Heart right ventricle (tissue), 16 donors: ENCODE measurements at regions of chr20 and their contacts with region 1.

Region 1: DNA sequence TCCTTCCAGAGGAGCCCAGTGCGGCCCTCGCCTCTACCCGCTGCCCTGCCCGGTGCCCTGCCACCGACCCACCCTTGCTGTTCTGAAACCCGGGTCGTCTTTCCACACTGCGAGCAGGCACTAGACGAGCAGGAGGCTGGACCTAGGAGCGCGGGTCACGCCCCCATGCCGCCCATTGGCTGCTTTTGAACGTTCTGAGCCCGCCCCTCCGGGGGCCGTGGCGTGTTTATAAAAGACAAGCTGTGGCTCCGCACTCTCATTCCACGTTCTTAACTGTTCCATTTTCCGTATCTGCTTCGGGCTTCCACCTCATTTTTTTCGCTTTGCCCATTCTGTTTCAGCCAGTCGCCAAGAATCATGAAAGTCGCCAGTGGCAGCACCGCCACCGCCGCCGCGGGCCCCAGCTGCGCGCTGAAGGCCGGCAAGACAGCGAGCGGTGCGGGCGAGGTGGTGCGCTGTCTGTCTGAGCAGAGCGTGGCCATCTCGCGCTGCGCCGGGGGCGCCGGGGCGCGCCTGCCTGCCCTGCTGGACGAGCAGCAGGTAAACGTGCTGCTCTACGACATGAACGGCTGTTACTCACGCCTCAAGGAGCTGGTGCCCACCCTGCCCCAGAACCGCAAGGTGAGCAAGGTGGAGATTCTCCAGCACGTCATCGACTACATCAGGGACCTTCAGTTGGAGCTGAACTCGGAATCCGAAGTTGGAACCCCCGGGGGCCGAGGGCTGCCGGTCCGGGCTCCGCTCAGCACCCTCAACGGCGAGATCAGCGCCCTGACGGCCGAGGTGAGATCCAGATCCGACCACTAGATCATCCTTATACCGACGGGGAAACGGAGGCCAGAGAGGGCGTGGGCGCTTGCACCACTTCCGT is at the start of gene ID1:
- DNase-seq: peak; percentile 94 to 96
- ATAC-seq: peak; percentile 84 to 91 (median 88)
- H3K4me3 ChIP-seq: peak within 1 kb of the TSS; percentile 61 to 89 (median 80)
- H3K27ac ChIP-seq: peak within 1 kb of the TSS; percentile 86 to 99 (median 95)
- H3K4me1 ChIP-seq: peaks cover 8 to 65% (median 31%) of the 10 kb centered on the region in 9 donors
- H3K27me3 ChIP-seq: peaks cover 0 to 37% (median 0%) of the 10 kb centered on the region in 7 donors
- CTCF ChIP-seq: no peak
- total RNA-seq, gene ID1: 42.8 to 204 (median 109) TPM

Region 2: GRCh38 chr20:31560094-31560899 is 45.0 kb before region 1 on chr20:
- intact Hi-C with region 1: loop called in 1 of 10 experiments (anchors 5 kb)
- DNase-seq: peak; percentile 57 to 66
- ATAC-seq: peak in 6 of 8 donors; percentile 17 to 39 (median 23)
- H3K4me3 ChIP-seq: no peak overlapping the region
- H3K27ac ChIP-seq: peak overlapping the region in 2 of 10 donors; percentile 50 to 72
- H3K4me1 ChIP-seq: peaks cover 0 to 27% (median 5%) of the 10 kb centered on the region in 9 donors
- H3K27me3 ChIP-seq: no peaks in the 10 kb centered on the region
- CTCF ChIP-seq: peak; percentile 76 to 91 (median 86)

Region 3: GRCh38 chr20:31566658-31567379 is 38.4 kb before region 1 on chr20:
- intact Hi-C with region 1: loop called in 9 of 10 experiments (anchors 1 to 2 kb)
- DNase-seq: no peak
- ATAC-seq: no peak
- H3K4me3 ChIP-seq: no peak overlapping the region
- H3K27ac ChIP-seq: peak overlapping the region in 1 of 10 donors; percentile 93
- H3K4me1 ChIP-seq: peaks cover 0 to 46% (median 18%) of the 10 kb centered on the region in 9 donors
- H3K27me3 ChIP-seq: no peaks in the 10 kb centered on the region
- CTCF ChIP-seq: no peak

Region 4: GRCh38 chr20:31572701-31573554 is 32.3 kb before region 1 on chr20:
- intact Hi-C with region 1: loop called in 8 of 10 experiments (anchors 1 to 2 kb)
- DNase-seq: peak; percentile 93 to 96
- ATAC-seq: peak; percentile 88 to 92 (median 90)
- H3K4me3 ChIP-seq: peak overlapping the region; percentile 22 to 69 (median 56)
- H3K27ac ChIP-seq: peak overlapping the region; percentile 87 to 96 (median 93)
- H3K4me1 ChIP-seq: peaks cover 4 to 63% (median 39%) of the 10 kb centered on the region in 9 donors
- H3K27me3 ChIP-seq: no peaks in the 10 kb centered on the region
- CTCF ChIP-seq: peak in 1 of 9 donors; percentile 6

Region 5: GRCh38 chr20:31587545-31588389 is 17.5 kb before region 1 on chr20:
- intact Hi-C with region 1: loop called in 2 of 10 experiments (anchors 1 to 2 kb)
- DNase-seq: peak; percentile 78 to 82
- ATAC-seq: peak; percentile 86 to 94 (median 90)
- H3K4me3 ChIP-seq: peak overlapping the region; percentile 34 to 63 (median 50)
- H3K27ac ChIP-seq: peak overlapping the region; percentile 83 to 99 (median 90)
- H3K4me1 ChIP-seq: peaks cover 0 to 45% (median 15%) of the 10 kb centered on the region in 9 donors
- H3K27me3 ChIP-seq: peaks cover 0 to 17% (median 0%) of the 10 kb centered on the region in 7 donors
- CTCF ChIP-seq: no peak

Region 6: DNA sequence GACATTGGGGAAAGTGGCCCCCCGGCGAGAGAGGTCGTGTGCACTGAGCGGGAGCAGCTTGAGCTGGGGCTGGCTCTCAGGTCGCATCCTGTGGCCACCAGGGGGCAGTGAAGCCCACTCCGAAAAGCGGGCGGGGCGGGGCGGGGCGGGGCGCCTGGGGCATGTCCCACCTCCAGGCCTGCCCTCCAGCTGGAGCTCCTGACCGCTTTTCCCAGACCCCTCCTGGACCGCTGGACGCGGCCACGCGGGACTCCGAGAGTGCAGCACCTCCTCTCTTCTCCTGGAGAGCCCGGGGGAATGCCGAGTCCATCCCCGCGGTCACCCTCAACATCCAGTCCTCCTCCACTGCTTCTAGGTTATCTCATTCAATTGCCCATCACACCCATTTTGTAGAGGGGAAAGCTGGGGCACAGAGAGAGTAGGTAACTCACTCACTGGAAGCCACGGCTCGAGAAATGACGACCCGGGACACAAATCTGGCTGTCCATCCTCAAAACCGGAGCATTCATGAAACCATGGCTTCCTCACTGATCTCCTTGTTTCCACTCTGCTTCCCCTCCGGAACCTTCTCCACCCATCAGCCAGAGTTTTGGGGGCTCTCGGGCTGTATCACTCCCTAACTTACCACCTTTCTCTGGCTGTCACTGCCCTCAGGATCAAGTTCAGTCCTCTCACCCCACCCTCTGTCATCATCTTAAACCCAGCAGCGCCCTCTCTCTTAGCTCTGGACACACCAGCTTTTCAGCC is 56.5 kb after region 1 on chr20:
- intact Hi-C with region 1: no loop called
- DNase-seq: peak; percentile 83 to 87
- ATAC-seq: peak; percentile 83 to 92 (median 89)
- H3K4me3 ChIP-seq: peak overlapping the region in 8 of 10 donors; percentile 26 to 56 (median 46)
- H3K27ac ChIP-seq: peak overlapping the region; percentile 21 to 80 (median 76)
- H3K4me1 ChIP-seq: peaks cover 16 to 51% (median 44%) of the 10 kb centered on the region in 9 donors
- H3K27me3 ChIP-seq: no peaks in the 10 kb centered on the region
- CTCF ChIP-seq: peak; percentile 76 to 91 (median 87)